ENCODE measurements at regions of chr16 and their contacts with region 1.

Region 1: DNA sequence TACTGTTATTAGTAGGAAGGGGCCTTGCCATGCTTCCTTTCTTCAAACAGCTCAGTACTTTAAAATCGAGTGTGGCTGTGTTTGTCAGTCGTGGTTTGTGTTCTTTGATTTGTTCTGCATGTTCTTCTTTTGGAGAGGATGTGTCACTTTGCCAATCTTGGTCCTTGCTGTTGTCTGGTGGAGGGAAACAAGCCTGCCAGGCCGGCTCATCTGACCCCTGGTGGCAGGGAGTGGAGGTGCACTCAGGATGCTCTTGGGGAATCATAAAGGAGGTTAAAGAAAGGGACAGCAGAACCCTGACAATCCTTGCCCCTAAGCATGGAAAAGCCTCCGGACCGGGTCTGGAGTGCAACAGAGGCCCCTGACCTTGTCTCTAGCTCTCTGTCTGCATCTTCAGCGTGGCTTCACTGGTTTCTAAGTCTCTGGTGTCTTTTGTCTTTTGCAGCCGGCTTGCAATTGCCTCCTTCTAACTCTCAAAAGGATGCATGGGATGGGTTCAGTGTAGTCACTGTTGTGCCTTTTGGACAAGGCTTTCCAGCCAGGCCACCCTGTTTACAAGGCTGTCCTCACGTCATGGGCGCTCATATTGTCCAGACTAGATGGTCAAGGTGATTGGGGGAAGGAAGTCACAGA is 135.8 kb downstream of the WWOX start:
- DNase-seq: peak; percentile 58 to 83 (median 82)
- ATAC-seq: peak; percentile 87
- H3K4me3 ChIP-seq: no peak overlapping the region
- H3K4me1 ChIP-seq: peaks cover 7% of the 10 kb centered on the region
- CTCF ChIP-seq: peak; percentile 83

Region 2: GRCh38 chr16:78122774-78123315 is 112.4 kb before region 1 on chr16:
- intact Hi-C with region 1: loop called in 1 of 2 experiments (anchors 2 kb)
- DNase-seq: no peak
- ATAC-seq: peak; percentile 76
- H3K4me3 ChIP-seq: no peak overlapping the region
- H3K4me1 ChIP-seq: no peaks in the 10 kb centered on the region
- CTCF ChIP-seq: no peak

Region 3: GRCh38 chr16:78648517-78648916 is 413.2 kb after region 1 on chr16:
- intact Hi-C with region 1: no loop called
- DNase-seq: peak in 1 of 3 donors; percentile 24
- ATAC-seq: no peak
- H3K4me3 ChIP-seq: no peak overlapping the region
- H3K4me1 ChIP-seq: no peaks in the 10 kb centered on the region
- CTCF ChIP-seq: no peak

Measured in mucosa of descending colon (tissue), 3 donors.